ENCODE measurements at regions of chr22 and their contacts with region 1.

Region 1: GRCh38 chr22:22848364-22848866 is 39.2 kb upstream of the IGLL5 start:
- DNase-seq: peak; percentile 69 to 74
- H3K4me3 ChIP-seq: no peak overlapping the region
- H3K27ac ChIP-seq: no peak overlapping the region
- H3K4me1 ChIP-seq: no peaks in the 10 kb centered on the region
- H3K27me3 ChIP-seq: no peaks in the 10 kb centered on the region
- CTCF ChIP-seq: peak; percentile 47 to 89 (median 71)
- POLR2A ChIP-seq: no peak

Region 2: GRCh38 chr22:22397875-22398524 is 450.4 kb before region 1 on chr22:
- intact Hi-C with region 1: no loop called
- DNase-seq: no peak
- H3K4me3 ChIP-seq: no peak overlapping the region
- H3K27ac ChIP-seq: no peak overlapping the region
- H3K4me1 ChIP-seq: peaks cover 0 to 10% of the 10 kb centered on the region in 2 donors
- H3K27me3 ChIP-seq: no peaks in the 10 kb centered on the region
- CTCF ChIP-seq: no peak
- POLR2A ChIP-seq: no peak

Region 3: GRCh38 chr22:22776121-22776520 is 72.3 kb before region 1 on chr22:
- intact Hi-C with region 1: no loop called
- DNase-seq: no peak
- H3K4me3 ChIP-seq: no peak overlapping the region
- H3K27ac ChIP-seq: no peak overlapping the region
- H3K4me1 ChIP-seq: no peaks in the 10 kb centered on the region
- H3K27me3 ChIP-seq: no peaks in the 10 kb centered on the region
- CTCF ChIP-seq: no peak
- POLR2A ChIP-seq: no peak

Region 4: DNA sequence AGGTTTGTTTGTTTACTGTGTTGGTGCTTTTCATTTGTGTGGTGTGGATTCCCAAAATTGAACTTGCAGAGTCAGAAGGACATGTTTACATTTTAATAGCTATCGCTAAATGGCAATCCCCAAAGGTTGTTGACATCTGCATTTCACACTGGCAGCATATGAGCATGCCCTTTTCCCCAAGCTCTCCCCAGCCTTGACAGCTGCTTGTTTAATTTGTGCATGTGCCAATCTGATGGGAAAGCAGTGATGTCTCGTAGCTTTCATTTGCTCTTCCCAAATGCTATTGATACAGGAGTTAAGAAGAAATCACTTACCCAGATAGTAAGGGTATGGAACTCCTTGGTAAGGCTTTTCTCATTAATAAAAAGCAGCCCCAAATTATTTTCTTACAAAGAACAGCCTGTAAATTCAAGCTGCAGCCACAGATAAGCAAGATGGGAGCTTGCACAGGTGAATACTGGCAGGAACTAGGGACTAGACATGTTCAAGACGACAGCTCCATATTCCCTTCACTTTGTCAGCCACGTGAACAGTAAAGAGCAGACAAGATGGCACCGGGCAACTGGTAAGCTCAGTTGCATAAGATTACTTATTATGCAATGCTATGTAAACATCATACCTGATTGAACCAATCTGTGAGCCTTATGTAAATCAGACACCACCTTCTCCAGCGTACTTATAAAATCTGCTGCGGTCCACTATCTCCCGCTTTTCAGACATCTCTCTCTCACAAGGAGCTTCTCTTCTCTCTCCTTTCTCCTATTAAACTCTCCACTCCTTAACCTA is 126.6 kb after region 1 on chr22:
- intact Hi-C with region 1: no loop called
- DNase-seq: no peak
- H3K4me3 ChIP-seq: no peak overlapping the region
- H3K27ac ChIP-seq: no peak overlapping the region
- H3K4me1 ChIP-seq: no peaks in the 10 kb centered on the region
- H3K27me3 ChIP-seq: no peaks in the 10 kb centered on the region
- CTCF ChIP-seq: no peak
- POLR2A ChIP-seq: no peak

Region 5: DNA sequence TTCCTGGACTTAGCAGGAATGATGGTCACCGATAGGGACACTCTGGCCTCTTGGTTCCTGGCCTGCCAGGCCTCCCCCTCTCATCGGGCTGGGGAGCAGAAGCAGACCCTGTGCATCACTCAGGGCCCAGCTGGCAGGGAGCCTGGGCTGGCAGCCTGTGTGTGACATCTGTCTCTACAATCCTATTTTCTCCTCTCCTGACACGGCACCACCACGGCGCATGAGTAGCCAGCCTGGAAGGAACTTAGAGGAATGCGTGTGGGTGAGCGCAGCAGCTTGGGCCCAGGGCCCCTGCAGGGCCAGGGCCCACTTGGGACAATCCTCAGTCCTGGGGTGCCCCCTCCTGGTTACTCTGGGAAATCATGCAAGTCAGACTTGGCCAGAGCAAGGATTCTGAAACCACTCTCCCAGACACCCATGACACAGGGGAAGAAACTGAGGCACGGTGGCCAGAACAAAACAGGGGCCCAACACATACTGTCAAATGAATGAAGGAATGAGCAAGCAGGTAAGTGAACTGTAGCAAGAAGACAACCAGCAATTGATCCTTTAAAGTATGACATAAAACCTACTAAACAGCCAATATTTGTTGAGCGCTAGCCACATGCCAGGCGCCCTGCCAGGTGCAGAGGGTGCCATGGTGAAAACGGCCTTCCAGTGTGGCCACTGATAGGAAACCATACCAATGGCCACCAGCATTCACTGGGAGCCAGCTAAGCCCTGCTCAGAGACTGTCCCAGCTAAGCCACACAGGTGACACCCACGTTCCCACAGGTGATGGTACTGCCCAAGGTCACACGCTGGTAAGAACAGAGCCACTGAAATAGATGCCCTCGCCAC is 280.1 kb after region 1 on chr22:
- intact Hi-C with region 1: loop called (anchors 5 kb)
- DNase-seq: peak; percentile 80 to 86
- H3K4me3 ChIP-seq: no peak overlapping the region
- H3K27ac ChIP-seq: no peak overlapping the region
- H3K4me1 ChIP-seq: peaks cover 0 to 4% of the 10 kb centered on the region in 2 donors
- H3K27me3 ChIP-seq: no peaks in the 10 kb centered on the region
- CTCF ChIP-seq: peak; percentile 63 to 89 (median 79)
- POLR2A ChIP-seq: no peak